Gastrocnemius medialis (tissue), 4 donors: ENCODE measurements at regions of chr12 and their contacts with region 1.

Region 1: DNA sequence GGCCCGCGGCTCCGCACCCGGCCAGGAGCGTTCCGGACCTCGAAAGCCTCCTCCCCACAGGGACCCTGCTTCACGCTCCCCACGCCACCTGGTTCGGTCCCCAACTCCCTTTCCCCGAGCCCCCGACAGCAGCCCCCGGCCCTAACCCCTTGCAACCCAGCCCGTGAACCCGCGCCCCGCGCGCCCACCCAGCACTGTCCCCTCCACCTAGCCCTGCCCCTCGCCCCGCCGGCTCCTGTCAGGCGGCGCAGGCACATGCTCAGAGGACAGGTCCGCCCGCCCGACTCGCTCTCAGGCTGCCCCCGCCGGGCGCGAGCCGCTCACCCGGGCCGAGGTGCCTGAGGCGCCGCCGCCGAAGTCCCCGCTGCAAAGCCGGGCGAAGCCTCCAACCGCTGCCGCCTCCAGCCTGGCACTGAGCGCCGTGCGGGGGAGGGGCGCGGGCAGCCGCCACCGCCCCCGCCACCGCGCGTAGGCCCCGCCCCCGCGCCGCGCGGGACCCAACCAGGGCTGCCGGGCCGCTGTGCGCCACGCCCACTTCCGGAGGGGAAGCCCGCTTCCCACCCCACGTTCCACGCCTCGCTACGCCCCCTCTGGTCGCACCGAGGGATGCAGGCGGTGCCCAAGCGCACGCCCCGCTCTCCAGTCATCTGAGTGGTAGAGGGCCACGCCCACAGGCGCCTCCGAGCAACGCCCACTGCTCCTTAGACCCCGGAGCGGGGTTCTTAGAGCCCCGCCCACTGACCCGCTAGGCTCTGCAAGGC is at the start of gene CORO1C:
- DNase-seq: peak; percentile 96 to 98
- ATAC-seq: peak; percentile 66 to 73
- H3K4me3 ChIP-seq: peak within 1 kb of the TSS; percentile 91 to 99 (median 96)
- H3K27ac ChIP-seq: peak within 1 kb of the TSS; percentile 96 to 100 (median 100)
- H3K4me1 ChIP-seq: peaks cover 34 to 38% of the 10 kb centered on the region in 2 donors
- H3K27me3 ChIP-seq: no peaks in the 10 kb centered on the region
- CTCF ChIP-seq: peak; percentile 82 to 97 (median 96)
- POLR2A ChIP-seq: peak; percentile 99 to 100
- total RNA-seq, gene CORO1C: 24.7 to 47.6 (median 30.9) TPM

Region 2: GRCh38 chr12:108691175-108691997 is 39.9 kb before region 1 on chr12:
- in situ Hi-C with region 1: no loop called
- intact Hi-C with region 1: loop called (anchors 1 kb)
- DNase-seq: peak; percentile 98 to 100
- ATAC-seq: peak; percentile 68 to 72
- H3K4me3 ChIP-seq: peak overlapping the region; percentile 34 to 49 (median 45)
- H3K27ac ChIP-seq: peak overlapping the region; percentile 92 to 98 (median 96)
- H3K4me1 ChIP-seq: peaks cover 86 to 91% of the 10 kb centered on the region in 2 donors
- H3K27me3 ChIP-seq: no peaks in the 10 kb centered on the region
- CTCF ChIP-seq: peak; percentile 44 to 68 (median 56)
- POLR2A ChIP-seq: peak; percentile 60 to 70

Region 3: GRCh38 chr12:108788076-108788782 is 56.9 kb after region 1 on chr12:
- in situ Hi-C with region 1: no loop called
- intact Hi-C with region 1: loop called (anchors 5 kb)
- DNase-seq: no peak
- ATAC-seq: no peak
- H3K4me3 ChIP-seq: no peak overlapping the region
- H3K27ac ChIP-seq: peak overlapping the region; percentile 77 to 92 (median 84)
- H3K4me1 ChIP-seq: peaks cover 54 to 61% of the 10 kb centered on the region in 2 donors
- H3K27me3 ChIP-seq: no peaks in the 10 kb centered on the region
- CTCF ChIP-seq: no peak
- POLR2A ChIP-seq: no peak

Region 4: DNA sequence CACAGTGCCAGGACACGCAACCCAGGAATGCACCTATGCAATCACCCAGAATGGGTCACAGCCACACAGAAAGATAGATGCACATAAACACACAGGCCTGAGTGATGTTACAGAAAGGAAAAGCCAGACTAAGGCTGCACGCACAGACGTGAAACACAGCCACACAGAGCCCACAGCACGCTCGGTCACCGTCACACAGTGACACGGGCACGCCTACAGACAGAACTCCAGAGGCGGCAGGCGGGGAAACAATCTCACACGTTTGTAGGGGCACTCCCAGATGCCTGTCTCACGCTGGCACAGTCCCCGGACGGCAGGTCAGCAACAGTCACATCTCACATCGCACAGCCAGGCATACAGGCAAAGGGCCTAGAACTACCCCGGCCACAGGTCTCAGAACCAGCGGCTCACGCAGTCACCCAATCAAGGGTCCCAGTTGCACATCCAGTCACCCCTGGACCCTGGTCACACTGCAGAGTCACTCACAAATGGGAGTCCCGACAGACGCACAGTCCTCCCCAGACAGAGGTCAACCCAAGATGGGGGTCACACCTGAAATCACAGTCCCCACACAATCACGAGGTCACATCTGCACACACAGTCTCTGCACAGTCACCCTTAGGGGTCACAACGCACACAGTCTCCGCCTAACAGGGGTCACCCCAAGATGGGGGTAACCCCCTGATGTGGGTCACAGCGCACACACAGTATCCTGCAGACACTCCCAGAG is 125.3 kb after region 1 on chr12:
- in situ Hi-C with region 1: no loop called
- intact Hi-C with region 1: loop called (anchors 1 kb)
- DNase-seq: peak; percentile 70 to 91
- ATAC-seq: peak; percentile 28 to 39
- H3K4me3 ChIP-seq: peak overlapping the region; percentile 64 to 97 (median 86)
- H3K27ac ChIP-seq: peak overlapping the region; percentile 90 to 98 (median 96)
- H3K4me1 ChIP-seq: peaks cover 52 to 61% of the 10 kb centered on the region in 2 donors
- H3K27me3 ChIP-seq: no peaks in the 10 kb centered on the region
- CTCF ChIP-seq: no peak
- POLR2A ChIP-seq: peak; percentile 48 to 58

Region 5: DNA sequence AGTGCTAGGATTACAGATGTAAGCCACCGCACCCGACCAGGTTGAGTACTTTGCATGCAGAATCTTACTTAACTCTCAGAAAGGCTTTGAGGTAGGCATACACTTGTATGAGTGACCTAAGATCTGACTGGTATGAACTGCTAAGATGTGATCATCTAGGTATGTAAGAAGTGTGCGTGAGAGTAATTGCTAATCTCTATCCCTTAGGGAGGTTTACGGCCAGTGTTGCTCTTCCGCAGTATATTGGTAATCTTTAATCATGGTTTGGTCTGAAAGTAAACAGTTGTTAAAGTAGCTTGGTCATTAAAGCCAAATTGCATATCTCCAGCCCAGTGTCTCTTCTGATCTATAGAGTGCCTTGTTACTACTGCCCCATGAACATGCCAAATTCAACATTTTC is 373.9 kb after region 1 on chr12:
- in situ Hi-C with region 1: no loop called
- intact Hi-C with region 1: no loop called
- DNase-seq: no peak
- ATAC-seq: no peak
- H3K4me3 ChIP-seq: no peak overlapping the region
- H3K27ac ChIP-seq: no peak overlapping the region
- H3K4me1 ChIP-seq: peaks cover 0 to 1% of the 10 kb centered on the region in 2 donors
- H3K27me3 ChIP-seq: no peaks in the 10 kb centered on the region
- CTCF ChIP-seq: no peak
- POLR2A ChIP-seq: no peak